ENCODE measurements at regions of chr17 and their contacts with region 1.

Region 1: GRCh38 chr17:1495265-1495989 is 2.9 kb upstream of the MYO1C start:
- DNase-seq: no peak
- H3K4me3 ChIP-seq: no peak overlapping the region
- H3K27ac ChIP-seq: no peak overlapping the region
- H3K4me1 ChIP-seq: peaks cover 24% of the 10 kb centered on the region
- H3K27me3 ChIP-seq: no peaks in the 10 kb centered on the region
- CTCF ChIP-seq: no peak
- POLR2A ChIP-seq: no peak

Region 2: DNA sequence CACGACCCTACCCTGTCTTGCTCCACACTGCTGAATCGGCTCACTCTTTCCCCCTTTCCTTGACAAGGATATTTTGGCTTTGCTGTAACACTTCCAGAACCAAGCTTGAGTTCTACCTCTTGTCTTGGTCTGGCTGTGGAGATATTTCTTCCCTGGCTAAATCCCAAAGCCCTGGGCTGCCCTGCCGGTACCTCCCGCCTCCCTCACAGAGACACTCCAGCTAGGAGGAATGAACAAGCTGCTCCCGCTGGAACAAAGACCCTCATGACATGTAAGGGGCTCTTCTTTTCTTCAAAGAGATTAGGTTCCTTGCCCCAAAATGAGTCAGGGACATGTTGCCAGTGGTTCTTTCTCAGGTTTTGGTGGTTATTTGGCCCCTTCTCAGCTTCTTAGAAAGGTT is 10.2 kb after region 1 on chr17:
- CTCF ChIA-PET with region 1: interaction called, 17 read pairs
- POLR2A ChIA-PET with region 1: no interaction called
- dilution Hi-C with region 1: no loop called
- intact Hi-C with region 1: no loop called
- DNase-seq: no peak
- H3K4me3 ChIP-seq: no peak overlapping the region
- H3K27ac ChIP-seq: no peak overlapping the region
- H3K4me1 ChIP-seq: peaks cover 5% of the 10 kb centered on the region
- H3K27me3 ChIP-seq: no peaks in the 10 kb centered on the region
- CTCF ChIP-seq: no peak
- POLR2A ChIP-seq: no peak

Region 3: DNA sequence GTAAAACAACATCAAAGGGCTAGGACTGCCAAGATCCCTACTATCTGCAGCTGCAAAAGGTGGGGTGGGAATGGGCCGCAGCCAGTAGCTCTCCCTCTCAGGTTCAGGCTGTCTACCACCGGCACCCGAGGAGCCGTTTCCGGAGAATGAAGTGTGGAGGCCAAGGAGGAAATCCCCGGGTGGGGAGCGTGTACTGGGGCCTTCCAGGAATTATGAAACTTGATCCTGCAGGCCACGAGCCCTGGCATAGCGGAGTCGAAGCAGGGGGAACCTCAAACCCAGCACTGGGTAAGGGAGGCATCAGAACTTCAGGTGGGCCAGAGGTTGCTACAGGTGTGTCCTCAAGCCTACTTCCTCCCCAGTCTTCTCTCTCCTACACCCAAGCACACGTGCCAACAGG is 15.9 kb after region 1 on chr17:
- CTCF ChIA-PET with region 1: interaction called, 36 read pairs
- POLR2A ChIA-PET with region 1: interaction called, 4 read pairs
- dilution Hi-C with region 1: no loop called
- intact Hi-C with region 1: loop called (anchors 1 kb)
- DNase-seq: peak; percentile 75
- H3K4me3 ChIP-seq: no peak overlapping the region
- H3K27ac ChIP-seq: peak overlapping the region; percentile 34
- H3K4me1 ChIP-seq: peaks cover 35% of the 10 kb centered on the region
- H3K27me3 ChIP-seq: no peaks in the 10 kb centered on the region
- CTCF ChIP-seq: no peak
- POLR2A ChIP-seq: peak; percentile 15